Posterior vena cava (tissue), 2 donors: ENCODE measurements at regions of chr5 and their contacts with region 1.

Region 1: DNA sequence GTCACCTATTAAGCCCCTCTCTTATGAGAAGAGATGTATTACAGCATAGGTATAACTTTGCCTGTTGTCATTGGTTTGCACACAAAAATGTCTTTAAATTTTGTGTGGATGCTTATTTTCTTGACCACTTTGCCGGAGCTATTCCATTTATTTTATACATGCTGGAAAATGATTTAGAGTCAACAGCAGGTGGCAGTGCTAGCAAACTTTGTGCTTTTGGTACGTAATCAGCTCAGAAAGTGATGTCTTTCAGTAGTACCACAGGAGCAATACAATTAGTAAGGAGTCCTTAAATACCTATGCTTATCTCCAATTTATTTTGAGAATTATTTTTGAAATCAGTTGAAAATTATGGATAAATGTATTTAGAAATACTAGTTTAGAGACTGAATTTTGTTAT is 19.8 kb upstream of the NUDT12 start:
- DNase-seq: no peak

Region 2: DNA sequence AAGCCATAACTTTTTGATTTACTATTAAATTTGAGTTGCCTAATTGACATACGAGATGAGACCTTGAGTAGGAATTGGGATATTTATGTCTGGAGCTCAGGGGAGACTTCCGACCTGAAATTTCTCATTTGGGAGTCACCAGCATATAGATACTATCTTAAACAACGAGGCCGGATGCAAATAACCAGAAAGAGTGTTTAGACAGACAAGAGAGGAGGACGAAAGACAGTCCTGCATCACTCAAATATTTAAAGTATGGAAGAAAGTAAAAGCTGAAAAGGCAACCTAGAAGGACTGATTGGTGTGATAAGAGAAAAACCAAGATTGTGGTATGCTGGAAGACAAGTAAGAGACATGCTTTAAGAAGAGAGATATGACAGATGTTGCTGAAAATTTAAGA is 655.2 kb after region 1 on chr5:
- intact Hi-C with region 1: loop called in 1 of 2 experiments (anchors 5 kb)
- DNase-seq: no peak